PC-9 (cell line): ENCODE measurements at regions of chr5 and their contacts with region 1.

Region 1: GRCh38 chr5:19790829-19791466 is 197.1 kb downstream of the CDH18 start:
- DNase-seq: no peak
- H3K4me3 ChIP-seq: no peak overlapping the region
- H3K27ac ChIP-seq: no peak overlapping the region
- H3K4me1 ChIP-seq: no peaks in the 10 kb centered on the region
- H3K27me3 ChIP-seq: no peaks in the 10 kb centered on the region
- CTCF ChIP-seq: no peak

Region 2: DNA sequence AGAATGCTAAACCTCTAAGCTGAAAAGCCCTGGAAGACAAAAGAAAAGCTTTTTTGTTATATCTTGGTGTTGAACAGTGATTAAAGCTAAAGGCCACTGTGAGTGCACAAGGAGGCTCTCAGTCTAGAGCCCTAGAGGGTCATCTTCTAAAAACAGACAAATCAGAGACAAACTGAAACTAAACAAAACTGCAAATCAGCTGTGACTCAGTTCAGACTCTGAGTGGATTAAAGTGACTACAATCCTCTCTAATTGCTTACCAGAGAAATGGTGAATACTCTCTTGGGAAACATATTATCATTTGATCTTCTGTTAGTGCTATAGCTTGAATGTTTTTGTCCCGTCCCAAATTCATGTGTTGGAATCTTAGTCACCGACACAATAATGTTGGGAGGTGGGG is 294.9 kb before region 1 on chr5:
- CTCF ChIA-PET with region 1: no interaction called
- POLR2A ChIA-PET with region 1: no interaction called
- intact Hi-C with region 1: no loop called
- DNase-seq: no peak
- H3K4me3 ChIP-seq: no peak overlapping the region
- H3K27ac ChIP-seq: no peak overlapping the region
- H3K4me1 ChIP-seq: peaks cover 11% of the 10 kb centered on the region; the same call in 1 of the 2 replicates
- H3K27me3 ChIP-seq: no peaks in the 10 kb centered on the region
- CTCF ChIP-seq: no peak

Region 3: GRCh38 chr5:19902316-19902934 is 111.5 kb after region 1 on chr5:
- CTCF ChIA-PET with region 1: no interaction called
- POLR2A ChIA-PET with region 1: interaction called, 12 read pairs
- intact Hi-C with region 1: no loop called
- DNase-seq: no peak
- H3K4me3 ChIP-seq: no peak overlapping the region
- H3K27ac ChIP-seq: no peak overlapping the region
- H3K4me1 ChIP-seq: no peaks in the 10 kb centered on the region
- H3K27me3 ChIP-seq: no peaks in the 10 kb centered on the region
- CTCF ChIP-seq: no peak

Region 4: GRCh38 chr5:19959830-19960384 is 169.0 kb after region 1 on chr5:
- CTCF ChIA-PET with region 1: interaction called, 11 read pairs
- POLR2A ChIA-PET with region 1: no interaction called
- intact Hi-C with region 1: no loop called
- DNase-seq: no peak
- H3K4me3 ChIP-seq: no peak overlapping the region
- H3K27ac ChIP-seq: no peak overlapping the region
- H3K4me1 ChIP-seq: no peaks in the 10 kb centered on the region
- H3K27me3 ChIP-seq: no peaks in the 10 kb centered on the region
- CTCF ChIP-seq: no peak